CD14-positive monocyte (primary cell): ENCODE measurements at regions of chr17 and their contacts with region 1.

Region 1: GRCh38 chr17:50397111-50397918 is at the start of gene LRRC59:
- DNase-seq: peak; percentile 72 to 87 (median 87)
- H3K4me3 ChIP-seq: peak within 1 kb of the TSS; percentile 93 to 99 (median 95)
- H3K4me3 Mint-ChIP-seq: peak within 1 kb of the TSS; percentile 86 to 89
- H3K27ac ChIP-seq: peak within 1 kb of the TSS; percentile 80 to 96
- H3K27ac Mint-ChIP-seq: peak within 1 kb of the TSS; percentile 84 to 94 (median 90)
- H3K4me1 ChIP-seq: peaks cover 25 to 29% of the 10 kb centered on the region in 2 donors
- H3K4me1 Mint-ChIP-seq: peaks cover 28% of the 10 kb centered on the region
- H3K27me3 ChIP-seq: no peaks in the 10 kb centered on the region
- H3K27me3 Mint-ChIP-seq: peaks cover 0 to 6% (median 2%) of the 10 kb centered on the region in 3 donors
- CTCF ChIP-seq: peak; percentile 99
- polyA plus RNA-seq, gene LRRC59: 36.6 to 48.9 (median 45.7) TPM

Region 2: DNA sequence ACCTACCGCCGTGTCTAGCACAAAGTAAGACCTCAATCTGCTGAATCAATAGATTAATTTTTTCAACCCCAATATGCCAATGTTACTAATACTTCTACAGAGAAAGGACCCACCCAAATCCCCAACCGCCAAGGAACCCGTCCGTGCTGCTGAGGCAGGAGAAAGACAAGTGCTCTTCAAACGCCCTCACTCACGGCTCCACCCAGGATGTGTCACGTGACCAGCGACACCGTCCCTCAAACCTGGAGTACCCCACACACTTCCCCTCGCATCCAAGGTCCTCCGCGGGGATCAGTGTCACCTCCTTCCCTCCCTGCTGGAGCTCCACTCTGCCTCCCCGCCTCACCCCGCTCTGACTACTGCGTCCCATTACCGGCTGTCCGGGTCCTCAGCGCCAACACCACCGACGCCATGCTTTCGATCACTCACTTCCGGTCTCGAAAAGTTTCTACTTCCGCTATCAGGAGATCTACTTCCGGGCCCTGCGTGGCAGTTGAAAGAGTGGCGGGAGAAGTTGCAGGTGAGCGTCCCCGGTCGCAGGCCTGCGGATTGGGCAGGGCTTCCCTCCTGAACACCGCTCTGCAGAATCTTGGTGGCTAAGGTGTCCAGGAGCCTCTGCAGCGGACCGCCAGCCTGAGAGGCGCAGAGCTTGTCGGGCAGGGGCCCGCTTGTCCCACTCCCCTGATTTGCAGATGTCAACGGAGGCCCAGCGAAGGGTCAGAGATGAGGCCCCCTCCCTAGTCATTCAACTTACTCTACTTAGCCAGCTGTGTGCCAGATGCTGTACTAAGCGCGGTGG is 24.4 kb before region 1 on chr17 and contains the starts of genes EME1 and MRPL27:
- intact Hi-C with region 1: loop called in 1 of 2 experiments (anchors 2 kb)
- DNase-seq: peak; percentile 83 to 87 (median 85)
- H3K4me3 ChIP-seq: peak within 1 kb of the TSS; percentile 61 to 89 (median 87)
- H3K4me3 Mint-ChIP-seq: peak within 1 kb of the TSS; percentile 99 to 100
- H3K27ac ChIP-seq: peak within 1 kb of the TSS; percentile 87 to 98
- H3K27ac Mint-ChIP-seq: peak within 1 kb of the TSS; percentile 97 to 100 (median 100)
- H3K4me1 ChIP-seq: peaks cover 16 to 22% of the 10 kb centered on the region in 2 donors
- H3K4me1 Mint-ChIP-seq: peaks cover 20% of the 10 kb centered on the region
- H3K27me3 ChIP-seq: no peaks in the 10 kb centered on the region
- H3K27me3 Mint-ChIP-seq: peaks cover 0 to 1% (median 0%) of the 10 kb centered on the region in 3 donors
- CTCF ChIP-seq: no peak
- polyA plus RNA-seq, gene EME1: 0.33 to 0.76 (median 0.43) TPM
- polyA plus RNA-seq, gene MRPL27: 33.2 to 82.3 (median 75.3) TPM

Region 3: DNA sequence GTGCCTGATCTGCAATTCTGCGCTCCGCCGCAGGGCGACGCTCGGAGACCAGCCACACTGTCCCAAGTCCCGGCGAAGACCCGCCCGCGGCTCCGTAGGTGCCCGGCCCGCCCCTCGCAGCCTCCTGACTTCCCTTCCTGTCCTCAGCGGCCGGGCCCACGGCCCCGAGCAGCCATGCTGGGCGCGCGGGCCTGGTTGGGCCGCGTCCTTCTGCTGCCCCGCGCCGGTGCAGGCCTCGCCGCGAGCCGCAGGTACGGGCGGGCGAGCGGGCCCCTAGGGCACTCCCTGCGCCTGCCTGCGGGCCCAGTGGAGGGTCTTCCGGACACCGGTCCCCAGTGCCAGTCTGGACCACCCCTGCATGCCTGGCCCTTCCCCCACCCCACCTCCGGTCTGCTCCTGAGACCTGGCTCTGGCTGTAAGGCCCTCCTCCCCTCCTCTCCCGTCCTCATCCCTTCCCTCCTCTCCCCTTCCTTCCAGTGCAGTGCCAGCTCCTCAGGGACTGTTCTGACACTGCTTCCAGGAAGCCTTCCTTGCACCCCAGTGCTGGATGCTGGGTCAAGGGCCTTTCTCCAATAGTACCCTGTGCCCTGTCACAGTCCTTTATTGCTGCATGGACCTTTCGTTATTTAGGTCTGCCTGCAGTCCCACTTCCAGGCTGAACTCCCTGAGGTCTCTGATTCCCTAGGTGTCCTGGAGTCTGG is 149.9 kb after region 1 on chr17 and contains the start of gene SPATA20:
- intact Hi-C with region 1: no loop called
- DNase-seq: peak; percentile 85 to 93 (median 91)
- H3K4me3 ChIP-seq: peak within 1 kb of the TSS; percentile 31 to 81 (median 46)
- H3K4me3 Mint-ChIP-seq: peak within 1 kb of the TSS; percentile 73 to 86
- H3K27ac ChIP-seq: peak within 1 kb of the TSS in 1 of 2 donors; percentile 75
- H3K27ac Mint-ChIP-seq: peak within 1 kb of the TSS; percentile 49 to 80 (median 66)
- H3K4me1 ChIP-seq: peaks cover 23 to 28% of the 10 kb centered on the region in 2 donors
- H3K4me1 Mint-ChIP-seq: peaks cover 28% of the 10 kb centered on the region
- H3K27me3 ChIP-seq: no peaks in the 10 kb centered on the region
- H3K27me3 Mint-ChIP-seq: peaks cover 9 to 15% (median 14%) of the 10 kb centered on the region in 3 donors
- CTCF ChIP-seq: peak; percentile 98
- polyA plus RNA-seq, gene SPATA20: 9.3 to 37.8 (median 12.2) TPM

Region 4: DNA sequence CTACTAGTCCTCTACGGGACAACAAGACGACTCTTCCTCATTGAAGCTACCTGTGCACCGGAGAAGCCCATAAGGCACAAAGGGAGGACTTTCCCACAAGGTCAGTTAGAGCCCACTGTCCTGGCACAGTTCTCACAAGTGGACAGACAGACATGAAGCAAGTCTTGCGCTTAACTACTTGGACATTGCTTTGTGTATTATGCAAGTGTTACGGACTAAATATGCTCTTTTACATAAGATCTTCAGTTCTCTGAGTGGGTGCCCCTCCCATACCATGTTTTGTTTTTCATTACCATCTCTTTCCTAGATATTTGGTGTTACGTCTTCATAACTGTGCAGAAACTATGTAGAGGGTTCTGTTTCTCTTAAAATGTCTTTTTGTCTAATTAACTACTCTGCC is 351.9 kb after region 1 on chr17:
- intact Hi-C with region 1: no loop called
- DNase-seq: no peak
- H3K4me3 ChIP-seq: no peak overlapping the region
- H3K4me3 Mint-ChIP-seq: no peak overlapping the region
- H3K27ac ChIP-seq: no peak overlapping the region
- H3K27ac Mint-ChIP-seq: peak overlapping the region in 1 of 7 donors; percentile 1
- H3K4me1 ChIP-seq: no peaks in the 10 kb centered on the region
- H3K4me1 Mint-ChIP-seq: no peaks in the 10 kb centered on the region
- H3K27me3 ChIP-seq: no peaks in the 10 kb centered on the region
- H3K27me3 Mint-ChIP-seq: no peaks in the 10 kb centered on the region
- CTCF ChIP-seq: no peak